Calu3 (cell line): ENCODE measurements at regions of chr6 and their contacts with region 1.

Region 1: GRCh38 chr6:64034840-64035655 is 399.4 kb downstream of the PHF3 start:
- DNase-seq: peak; percentile 14
- H3K4me3 Mint-ChIP-seq: no peak overlapping the region
- H3K27ac Mint-ChIP-seq: no peak overlapping the region
- H3K4me1 Mint-ChIP-seq: peaks cover 17% of the 10 kb centered on the region
- H3K27me3 Mint-ChIP-seq: no peaks in the 10 kb centered on the region
- CTCF ChIP-seq: no peak

Region 2: GRCh38 chr6:63347599-63347998 is 687.4 kb before region 1 on chr6:
- CTCF ChIA-PET with region 1: no interaction called
- intact Hi-C with region 1: loop called (anchors 10 kb)
- DNase-seq: no peak
- H3K4me3 Mint-ChIP-seq: peak overlapping the region; percentile 37
- H3K27ac Mint-ChIP-seq: peak overlapping the region; percentile 93
- H3K4me1 Mint-ChIP-seq: peaks cover 58% of the 10 kb centered on the region
- H3K27me3 Mint-ChIP-seq: no peaks in the 10 kb centered on the region
- CTCF ChIP-seq: no peak

Region 3: GRCh38 chr6:64050590-64050989 is 15.5 kb after region 1 on chr6:
- CTCF ChIA-PET with region 1: interaction called, 3 read pairs
- intact Hi-C with region 1: loop called (anchors 1 kb)
- DNase-seq: no peak
- H3K4me3 Mint-ChIP-seq: no peak overlapping the region
- H3K27ac Mint-ChIP-seq: no peak overlapping the region
- H3K4me1 Mint-ChIP-seq: no peaks in the 10 kb centered on the region
- H3K27me3 Mint-ChIP-seq: no peaks in the 10 kb centered on the region
- CTCF ChIP-seq: no peak

Region 4: GRCh38 chr6:64146876-64147275 is 111.8 kb after region 1 on chr6:
- CTCF ChIA-PET with region 1: no interaction called
- intact Hi-C with region 1: no loop called
- DNase-seq: no peak
- H3K4me3 Mint-ChIP-seq: no peak overlapping the region
- H3K27ac Mint-ChIP-seq: no peak overlapping the region
- H3K4me1 Mint-ChIP-seq: no peaks in the 10 kb centered on the region
- H3K27me3 Mint-ChIP-seq: peaks cover 13% of the 10 kb centered on the region
- CTCF ChIP-seq: no peak